Endothelial cell of umbilical vein (primary cell): ENCODE measurements at regions of chr17 and their contacts with region 1.

Region 1: DNA sequence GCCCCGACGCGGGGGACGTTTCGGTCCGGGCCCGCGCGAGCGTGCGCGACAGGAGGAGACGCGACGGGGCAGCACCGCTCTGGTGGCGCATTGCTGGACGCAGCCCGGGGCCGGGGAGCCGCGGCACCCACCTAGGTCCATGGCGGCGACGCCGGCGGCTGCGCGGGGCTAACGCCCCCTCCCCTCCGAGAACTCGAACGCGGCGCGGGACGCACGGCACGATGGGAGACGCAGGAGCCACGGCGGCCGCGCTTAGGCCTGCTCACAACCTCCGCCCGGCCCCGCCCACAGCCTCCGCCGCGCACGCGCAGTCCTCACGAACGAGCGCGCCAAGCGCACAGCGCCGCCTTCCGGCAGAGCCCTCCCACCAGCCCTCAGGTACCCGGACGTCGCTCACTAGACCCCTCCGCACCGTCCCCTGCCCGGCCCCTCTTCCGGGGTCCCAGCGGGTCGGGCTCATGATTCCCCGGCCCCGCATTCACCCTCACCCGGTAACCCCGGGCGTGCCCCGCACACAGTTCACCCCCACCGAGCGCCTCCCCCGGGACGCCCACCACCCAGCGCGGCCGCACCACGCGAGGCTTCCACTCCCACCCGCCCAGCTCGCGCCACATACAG is at the start of gene GEMIN4:
- DNase-seq: peak; percentile 92
- H3K4me3 ChIP-seq: peak within 1 kb of the TSS; percentile 34 to 82 (median 78)
- H3K27ac ChIP-seq: peak within 1 kb of the TSS; percentile 30
- H3K4me1 ChIP-seq: peaks cover 18% of the 10 kb centered on the region
- H3K27me3 ChIP-seq: no peaks in the 10 kb centered on the region
- CTCF ChIP-seq: peak; percentile 94 to 99
- POLR2A ChIP-seq: peak; percentile 64
- total RNA-seq, gene GEMIN4: 29.1 and 29.9 TPM in 2 replicates

Region 2: DNA sequence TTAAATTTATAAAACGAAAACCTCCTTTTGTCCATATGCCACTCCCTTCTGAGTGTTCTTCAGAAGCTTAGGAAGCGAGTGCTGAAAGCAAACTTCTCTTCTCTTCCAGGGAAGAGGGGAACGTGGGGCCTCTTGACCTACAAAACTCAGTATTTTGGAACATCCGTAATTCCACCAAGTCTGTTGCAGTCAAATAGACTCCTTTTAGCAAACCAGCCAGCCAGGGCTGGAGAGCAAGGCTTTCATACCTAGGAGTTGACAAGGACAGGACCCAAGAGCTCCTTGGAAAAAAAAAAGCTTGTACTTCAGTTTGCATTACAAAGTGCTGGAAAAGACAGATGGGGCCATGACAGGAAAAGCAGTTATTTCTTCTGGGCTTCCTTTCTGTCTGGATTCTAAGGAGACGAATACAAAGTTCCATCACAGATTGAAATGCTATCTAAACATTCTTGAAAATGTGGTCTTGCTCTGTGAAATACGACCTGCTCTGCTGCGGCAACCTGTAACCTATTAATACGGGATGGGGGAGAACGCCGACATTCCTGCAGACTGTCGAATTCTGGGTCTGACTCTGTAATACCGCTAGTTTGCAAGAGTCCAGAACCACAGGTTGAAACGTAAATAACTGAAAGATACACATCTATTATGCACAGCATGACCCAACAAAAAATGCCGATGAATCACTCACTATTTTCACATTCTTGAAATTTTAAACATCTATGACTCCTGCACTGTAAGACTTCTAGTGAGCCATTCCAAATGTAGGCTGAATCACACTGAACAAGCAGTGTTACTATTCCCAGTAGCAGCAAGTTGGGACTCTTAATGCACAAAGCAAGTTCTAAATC is 58.1 kb before region 1 on chr17:
- CTCF ChIA-PET with region 1: no interaction called
- POLR2A ChIA-PET with region 1: no interaction called
- dilution Hi-C with region 1: no loop called
- intact Hi-C with region 1: no loop called
- DNase-seq: peak; percentile 78
- H3K4me3 ChIP-seq: peak overlapping the region in 1 of 3 experiments; percentile 20
- H3K27ac ChIP-seq: peak overlapping the region; percentile 95
- H3K4me1 ChIP-seq: peaks cover 27% of the 10 kb centered on the region
- H3K27me3 ChIP-seq: no peaks in the 10 kb centered on the region
- CTCF ChIP-seq: no peak
- POLR2A ChIP-seq: no peak

Region 3: GRCh38 chr17:716238-716637 is 35.9 kb before region 1 on chr17:
- CTCF ChIA-PET with region 1: interaction called, 4 read pairs
- POLR2A ChIA-PET with region 1: no interaction called
- dilution Hi-C with region 1: no loop called
- intact Hi-C with region 1: loop called (anchors 1 kb)
- DNase-seq: no peak
- H3K4me3 ChIP-seq: no peak overlapping the region
- H3K27ac ChIP-seq: no peak overlapping the region
- H3K4me1 ChIP-seq: peaks cover 19% of the 10 kb centered on the region
- H3K27me3 ChIP-seq: no peaks in the 10 kb centered on the region
- CTCF ChIP-seq: no peak
- POLR2A ChIP-seq: no peak

Region 4: GRCh38 chr17:732902-733720 is 19.0 kb before region 1 on chr17:
- CTCF ChIA-PET with region 1: interaction called, 3 read pairs
- POLR2A ChIA-PET with region 1: no interaction called
- dilution Hi-C with region 1: no loop called
- intact Hi-C with region 1: loop called (anchors 1 kb)
- DNase-seq: peak; percentile 57
- H3K4me3 ChIP-seq: peak overlapping the region; percentile 87 to 98 (median 91)
- H3K27ac ChIP-seq: peak overlapping the region; percentile 59
- H3K4me1 ChIP-seq: peaks cover 15% of the 10 kb centered on the region
- H3K27me3 ChIP-seq: no peaks in the 10 kb centered on the region
- CTCF ChIP-seq: no peak
- POLR2A ChIP-seq: no peak

Region 5: DNA sequence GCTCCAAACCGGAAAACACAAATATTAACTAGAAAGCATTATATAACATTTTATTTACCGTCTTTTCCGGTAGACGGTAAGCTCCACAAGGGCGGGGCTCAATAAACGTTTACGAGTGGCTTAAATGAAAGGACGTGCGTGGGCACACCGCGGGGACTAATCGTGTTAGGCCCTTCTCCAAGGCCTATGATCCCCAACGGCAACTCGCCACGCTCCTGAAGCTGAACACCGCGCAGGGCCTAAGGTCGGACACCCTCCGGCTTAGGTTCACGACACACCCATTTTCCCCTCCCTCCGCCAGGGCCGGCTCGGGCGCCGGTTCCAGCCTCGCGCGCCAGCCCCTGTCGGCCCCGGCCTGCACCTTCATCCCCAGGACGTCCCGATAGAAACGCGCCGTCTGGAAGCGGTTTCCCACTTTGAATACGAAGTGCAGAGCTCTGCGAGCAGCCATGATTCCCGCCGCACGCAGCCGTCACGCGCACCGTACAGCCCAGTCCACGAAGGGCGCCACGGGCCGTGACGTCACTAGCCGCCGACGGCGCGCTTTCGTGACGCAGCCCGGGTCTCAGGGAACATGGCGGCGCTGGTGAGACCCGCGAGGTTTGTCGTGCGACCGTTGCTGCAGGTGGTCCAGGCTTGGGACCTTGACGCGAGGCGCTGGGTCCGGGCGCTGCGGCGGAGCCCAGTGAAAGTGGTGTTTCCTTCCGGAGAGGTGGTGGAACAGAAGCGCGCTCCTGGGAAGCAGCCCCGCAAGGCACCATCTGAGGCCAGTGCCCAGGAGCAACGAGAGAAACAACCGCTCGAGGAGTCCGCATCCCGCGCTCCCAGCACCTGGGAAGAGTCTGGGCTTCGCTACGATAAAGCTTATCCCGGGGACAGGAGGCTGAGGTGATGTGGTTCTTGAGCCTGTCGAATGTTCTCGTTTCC is 30.0 kb after region 1 on chr17 and contains the starts of genes GLOD4 and MRM3:
- CTCF ChIA-PET with region 1: no interaction called
- POLR2A ChIA-PET with region 1: no interaction called
- dilution Hi-C with region 1: no loop called
- intact Hi-C with region 1: loop called (anchors 1 kb)
- DNase-seq: peak; percentile 92
- H3K4me3 ChIP-seq: peak within 1 kb of the TSS; percentile 66 to 91 (median 83)
- H3K27ac ChIP-seq: peak within 1 kb of the TSS; percentile 29
- H3K4me1 ChIP-seq: peaks cover 18% of the 10 kb centered on the region
- H3K27me3 ChIP-seq: no peaks in the 10 kb centered on the region
- CTCF ChIP-seq: no peak
- POLR2A ChIP-seq: peak; percentile 92
- total RNA-seq, gene GLOD4: 81.8 and 84.2 TPM in 2 replicates
- total RNA-seq, gene MRM3: 19.0 and 19.2 TPM in 2 replicates

Region 6: GRCh38 chr17:973053-973452 is 220.9 kb after region 1 on chr17:
- CTCF ChIA-PET with region 1: no interaction called
- POLR2A ChIA-PET with region 1: no interaction called
- dilution Hi-C with region 1: no loop called
- intact Hi-C with region 1: no loop called
- DNase-seq: no peak
- H3K4me3 ChIP-seq: no peak overlapping the region
- H3K27ac ChIP-seq: no peak overlapping the region
- H3K4me1 ChIP-seq: peaks cover 11% of the 10 kb centered on the region
- H3K27me3 ChIP-seq: no peaks in the 10 kb centered on the region
- CTCF ChIP-seq: no peak
- POLR2A ChIP-seq: no peak